CD8-positive, alpha-beta T cell (primary cell): ENCODE measurements at regions of chr2 and their contacts with region 1.

Region 1: DNA sequence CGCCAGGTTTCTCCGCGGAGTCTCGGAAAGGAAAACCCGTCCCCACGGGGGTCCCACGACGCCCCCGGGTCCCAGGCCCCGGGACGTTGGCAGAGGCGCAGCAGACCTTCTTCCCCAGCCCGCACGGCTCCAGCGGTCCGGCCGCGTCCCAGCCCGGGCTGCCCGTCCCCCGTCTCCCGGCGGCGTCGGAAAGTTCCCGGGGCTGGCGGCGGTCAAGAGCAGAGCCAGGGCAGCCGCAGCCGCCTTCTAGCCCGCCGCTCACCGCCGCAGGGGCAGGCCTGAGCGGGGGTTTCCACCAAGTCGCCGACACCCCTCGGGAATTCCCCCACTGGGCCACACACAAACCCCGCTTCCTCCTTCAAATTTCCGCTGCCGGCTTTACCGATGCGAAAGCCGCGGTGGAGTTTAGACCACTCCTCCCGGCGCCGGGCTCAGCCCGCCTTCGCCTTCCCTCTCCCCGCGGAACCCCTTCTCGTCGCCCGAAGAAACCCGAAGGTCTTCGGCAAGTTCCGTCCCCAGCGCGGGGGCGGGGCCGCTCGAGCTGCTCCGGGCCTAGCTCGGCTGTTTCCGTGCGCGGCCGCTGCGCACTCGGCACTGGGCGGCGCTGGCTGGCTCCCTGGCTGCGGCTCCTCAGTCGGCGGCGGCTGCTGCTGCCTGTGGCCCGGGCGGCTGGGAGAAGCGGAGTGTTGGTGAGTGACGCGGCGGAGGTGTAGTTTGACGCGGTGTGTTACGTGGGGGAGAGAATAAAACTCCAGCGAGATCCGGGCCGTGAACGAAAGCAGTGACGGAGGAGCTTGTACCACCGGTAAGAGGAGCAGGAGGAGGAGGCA is at the start of gene CREB1:
- DNase-seq: peak; percentile 99 to 100 (median 100)
- ATAC-seq: peak; percentile 80
- H3K4me3 ChIP-seq: peak within 1 kb of the TSS; percentile 73 to 82
- H3K4me3 Mint-ChIP-seq: peak within 1 kb of the TSS; percentile 90
- H3K27ac ChIP-seq: peak within 1 kb of the TSS; percentile 97 to 99
- H3K27ac Mint-ChIP-seq: peak within 1 kb of the TSS; percentile 98
- H3K4me1 ChIP-seq: peaks cover 59% of the 10 kb centered on the region
- H3K4me1 Mint-ChIP-seq: peaks cover 70% of the 10 kb centered on the region
- H3K27me3 ChIP-seq: no peaks in the 10 kb centered on the region
- H3K27me3 Mint-ChIP-seq: no peaks in the 10 kb centered on the region
- CTCF ChIP-seq: no peak
- total RNA-seq, gene CREB1: 43.9 to 51.4 TPM

Region 2: DNA sequence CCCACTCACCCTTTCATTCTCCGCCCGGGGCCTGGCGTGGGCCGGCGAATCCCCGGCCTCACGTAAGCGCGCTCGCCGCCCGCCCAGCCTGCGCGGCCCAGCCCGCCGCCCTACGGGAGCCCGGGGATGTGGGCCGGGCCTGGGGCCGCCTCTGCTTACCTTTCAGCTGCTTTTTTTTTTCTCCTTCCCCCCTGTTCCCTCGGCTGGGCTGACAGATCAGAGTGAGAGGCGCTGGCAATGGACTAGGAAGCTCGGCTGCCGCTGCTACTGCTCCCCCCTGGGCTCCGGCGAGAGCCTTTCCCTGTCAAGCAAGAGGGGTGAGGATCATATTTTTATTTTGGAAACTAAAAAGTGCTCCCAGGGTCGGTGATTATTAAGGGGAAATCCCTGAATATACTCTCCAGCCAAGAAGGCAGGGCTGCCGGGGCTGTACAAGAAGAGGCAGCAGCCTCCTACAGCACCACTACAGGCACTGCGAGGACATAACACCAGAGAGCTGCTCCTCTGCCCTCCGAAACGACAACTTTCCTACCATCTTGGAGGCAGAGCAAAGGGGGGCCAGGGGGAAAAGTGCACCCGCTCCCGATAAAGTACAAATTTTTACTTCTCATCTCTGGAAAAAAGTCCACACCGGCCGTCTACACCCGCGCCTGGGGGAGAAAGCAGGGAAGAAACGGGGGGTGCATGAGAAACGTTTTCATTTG is 1443.7 kb before region 1 on chr2 and contains the start of gene INO80D:
- CTCF ChIA-PET with region 1: no interaction called
- POLR2A ChIA-PET with region 1: no interaction called
- intact Hi-C with region 1: loop called in 1 of 2 experiments (anchors 10 kb)
- DNase-seq: peak; percentile 63 to 93 (median 76)
- ATAC-seq: peak; percentile 91
- H3K4me3 ChIP-seq: peak within 1 kb of the TSS; percentile 85 to 88
- H3K4me3 Mint-ChIP-seq: peak within 1 kb of the TSS; percentile 100
- H3K27ac ChIP-seq: peak within 1 kb of the TSS; percentile 92 to 98
- H3K27ac Mint-ChIP-seq: peak within 1 kb of the TSS; percentile 100
- H3K4me1 ChIP-seq: peaks cover 32% of the 10 kb centered on the region
- H3K4me1 Mint-ChIP-seq: peaks cover 50% of the 10 kb centered on the region
- H3K27me3 ChIP-seq: no peaks in the 10 kb centered on the region
- H3K27me3 Mint-ChIP-seq: no peaks in the 10 kb centered on the region
- CTCF ChIP-seq: peak; percentile 66
- total RNA-seq, gene INO80D: 48.5 to 48.6 TPM

Region 3: DNA sequence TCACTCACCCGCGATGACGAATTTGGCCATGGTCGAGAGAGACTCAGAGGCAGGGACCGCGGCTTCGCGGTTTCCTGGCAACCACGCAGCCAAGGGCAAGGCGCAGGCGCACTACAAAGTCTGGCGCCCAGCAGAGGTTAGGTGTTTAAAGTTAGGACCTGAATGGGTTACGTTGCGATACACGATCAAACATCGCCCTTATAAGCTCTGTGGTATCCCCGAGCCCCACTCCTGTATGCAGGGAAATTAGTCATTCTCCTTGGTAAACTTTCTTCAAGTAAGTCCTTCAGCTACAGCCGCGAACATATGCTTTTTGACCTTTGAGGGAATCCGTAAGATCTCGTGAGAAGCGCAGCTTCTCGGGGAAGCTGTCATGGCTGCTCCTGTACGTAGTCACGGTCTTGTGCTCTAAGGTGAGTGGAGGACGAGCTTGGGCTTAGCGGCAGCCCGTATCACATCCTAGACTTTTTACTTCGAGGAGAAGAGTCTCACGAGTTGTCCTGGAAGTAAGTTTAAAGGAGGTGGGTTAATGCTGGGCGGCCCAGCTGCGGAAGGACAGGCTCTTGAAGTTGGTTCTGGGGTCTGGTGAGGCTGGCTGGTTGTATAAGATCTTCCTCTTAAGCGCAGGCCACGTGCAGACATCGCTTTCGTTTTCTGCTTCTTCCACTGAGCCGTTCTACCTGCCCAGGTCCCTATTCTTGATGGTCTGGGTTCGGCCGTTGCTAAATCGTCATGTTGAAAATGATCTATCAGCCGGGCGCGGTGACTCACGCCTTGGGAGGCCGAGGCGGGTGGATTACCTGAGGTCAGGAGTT is 764.1 kb before region 1 on chr2 and contains the starts of genes FASTKD2 and MDH1B:
- CTCF ChIA-PET with region 1: no interaction called
- POLR2A ChIA-PET with region 1: interaction called, 10 read pairs
- intact Hi-C with region 1: loop called (anchors 1 to 5 kb)
- DNase-seq: peak; percentile 64 to 94 (median 81)
- ATAC-seq: peak; percentile 87
- H3K4me3 ChIP-seq: peak within 1 kb of the TSS; percentile 62 to 94
- H3K4me3 Mint-ChIP-seq: peak within 1 kb of the TSS; percentile 94
- H3K27ac ChIP-seq: peak within 1 kb of the TSS; percentile 93 to 97
- H3K27ac Mint-ChIP-seq: peak within 1 kb of the TSS; percentile 98
- H3K4me1 ChIP-seq: peaks cover 40% of the 10 kb centered on the region
- H3K4me1 Mint-ChIP-seq: peaks cover 41% of the 10 kb centered on the region
- H3K27me3 ChIP-seq: no peaks in the 10 kb centered on the region
- H3K27me3 Mint-ChIP-seq: no peaks in the 10 kb centered on the region
- CTCF ChIP-seq: no peak
- total RNA-seq, gene FASTKD2: 31.3 to 33.8 TPM
- total RNA-seq, gene MDH1B: 0.19 to 0.33 TPM

Region 4: GRCh38 chr2:207238831-207239701 is 290.5 kb before region 1 on chr2:
- CTCF ChIA-PET with region 1: no interaction called
- POLR2A ChIA-PET with region 1: no interaction called
- intact Hi-C with region 1: no loop called
- DNase-seq: peak in 1 of 9 experiments; percentile 25
- ATAC-seq: no peak
- H3K4me3 ChIP-seq: no peak overlapping the region
- H3K4me3 Mint-ChIP-seq: no peak overlapping the region
- H3K27ac ChIP-seq: no peak overlapping the region
- H3K27ac Mint-ChIP-seq: no peak overlapping the region
- H3K4me1 ChIP-seq: peaks cover 27% of the 10 kb centered on the region
- H3K4me1 Mint-ChIP-seq: peaks cover 12% of the 10 kb centered on the region
- H3K27me3 ChIP-seq: no peaks in the 10 kb centered on the region
- H3K27me3 Mint-ChIP-seq: no peaks in the 10 kb centered on the region
- CTCF ChIP-seq: no peak

Region 5: DNA sequence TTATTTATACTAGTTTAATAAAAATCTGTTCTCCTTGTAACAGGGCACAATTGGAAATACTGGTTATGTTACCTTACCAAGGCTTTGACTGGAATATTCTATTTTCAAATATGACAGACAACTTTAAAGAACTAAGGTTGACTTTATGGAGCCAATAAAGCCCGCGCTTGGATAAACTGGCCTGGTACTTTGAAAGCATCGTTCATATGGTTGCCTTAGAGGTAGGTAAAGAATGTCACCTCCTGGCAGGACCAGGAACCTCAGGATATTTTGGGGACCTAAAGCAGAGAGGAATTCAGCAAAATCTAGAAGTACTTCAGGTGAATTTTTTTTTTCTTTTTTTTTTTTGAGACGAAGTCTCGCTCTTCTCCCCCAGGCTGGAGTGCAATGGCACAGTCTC is 71.0 kb before region 1 on chr2:
- CTCF ChIA-PET with region 1: no interaction called
- POLR2A ChIA-PET with region 1: no interaction called
- intact Hi-C with region 1: no loop called
- DNase-seq: no peak
- ATAC-seq: no peak
- H3K4me3 ChIP-seq: no peak overlapping the region
- H3K4me3 Mint-ChIP-seq: no peak overlapping the region
- H3K27ac ChIP-seq: no peak overlapping the region
- H3K27ac Mint-ChIP-seq: no peak overlapping the region
- H3K4me1 ChIP-seq: no peaks in the 10 kb centered on the region
- H3K4me1 Mint-ChIP-seq: no peaks in the 10 kb centered on the region
- H3K27me3 ChIP-seq: no peaks in the 10 kb centered on the region
- H3K27me3 Mint-ChIP-seq: no peaks in the 10 kb centered on the region
- CTCF ChIP-seq: no peak

Region 6: GRCh38 chr2:207513551-207514257 is 15.8 kb before region 1 on chr2:
- CTCF ChIA-PET with region 1: interaction called, 7 read pairs
- POLR2A ChIA-PET with region 1: interaction called, 5 read pairs
- intact Hi-C with region 1: loop called in 1 of 2 experiments (anchors 1 kb)
- DNase-seq: no peak
- ATAC-seq: no peak
- H3K4me3 ChIP-seq: no peak overlapping the region
- H3K4me3 Mint-ChIP-seq: no peak overlapping the region
- H3K27ac ChIP-seq: no peak overlapping the region
- H3K27ac Mint-ChIP-seq: no peak overlapping the region
- H3K4me1 ChIP-seq: no peaks in the 10 kb centered on the region
- H3K4me1 Mint-ChIP-seq: peaks cover 4% of the 10 kb centered on the region
- H3K27me3 ChIP-seq: no peaks in the 10 kb centered on the region
- H3K27me3 Mint-ChIP-seq: no peaks in the 10 kb centered on the region
- CTCF ChIP-seq: no peak

Region 7: GRCh38 chr2:207565736-207566500 is 36.4 kb after region 1 on chr2:
- CTCF ChIA-PET with region 1: interaction called, 4 read pairs
- POLR2A ChIA-PET with region 1: interaction called, 9 read pairs
- intact Hi-C with region 1: loop called in 1 of 2 experiments (anchors 2 kb)
- DNase-seq: no peak
- ATAC-seq: no peak
- H3K4me3 ChIP-seq: no peak overlapping the region
- H3K4me3 Mint-ChIP-seq: no peak overlapping the region
- H3K27ac ChIP-seq: no peak overlapping the region
- H3K27ac Mint-ChIP-seq: peak overlapping the region; percentile 73
- H3K4me1 ChIP-seq: no peaks in the 10 kb centered on the region
- H3K4me1 Mint-ChIP-seq: peaks cover 31% of the 10 kb centered on the region
- H3K27me3 ChIP-seq: no peaks in the 10 kb centered on the region
- H3K27me3 Mint-ChIP-seq: no peaks in the 10 kb centered on the region
- CTCF ChIP-seq: no peak

Region 8: DNA sequence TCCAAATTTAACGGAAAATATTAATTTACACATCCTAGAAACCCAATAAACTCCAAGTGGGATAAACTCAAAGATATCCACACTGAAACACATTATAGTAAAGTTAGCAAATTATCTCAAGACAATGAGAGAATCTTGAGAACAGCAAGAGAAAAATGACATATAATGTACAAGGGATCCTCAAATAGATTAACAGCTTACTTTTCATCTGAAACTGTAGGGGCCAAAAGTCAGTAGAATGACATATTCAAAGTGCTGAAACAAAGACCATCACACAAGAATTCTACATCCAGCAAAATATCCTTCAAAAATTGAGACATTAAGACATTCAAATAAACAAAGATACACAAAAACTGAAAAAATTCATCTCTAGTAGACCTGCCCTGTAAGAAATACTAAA is 114.3 kb after region 1 on chr2:
- CTCF ChIA-PET with region 1: no interaction called
- POLR2A ChIA-PET with region 1: no interaction called
- intact Hi-C with region 1: no loop called
- DNase-seq: no peak
- ATAC-seq: no peak
- H3K4me3 ChIP-seq: no peak overlapping the region
- H3K4me3 Mint-ChIP-seq: no peak overlapping the region
- H3K27ac ChIP-seq: no peak overlapping the region
- H3K27ac Mint-ChIP-seq: no peak overlapping the region
- H3K4me1 ChIP-seq: no peaks in the 10 kb centered on the region
- H3K4me1 Mint-ChIP-seq: no peaks in the 10 kb centered on the region
- H3K27me3 ChIP-seq: peaks cover 0 to 2% of the 10 kb centered on the region in 2 experiments
- H3K27me3 Mint-ChIP-seq: peaks cover 4% of the 10 kb centered on the region
- CTCF ChIP-seq: no peak

Region 9: GRCh38 chr2:208025037-208025813 is 495.7 kb after region 1 on chr2 and contains the start of gene PLEKHM3:
- CTCF ChIA-PET with region 1: no interaction called
- POLR2A ChIA-PET with region 1: interaction called, 4 read pairs
- intact Hi-C with region 1: loop called in 1 of 2 experiments (anchors 5 kb)
- DNase-seq: peak; percentile 53 to 90 (median 71)
- ATAC-seq: peak; percentile 76
- H3K4me3 ChIP-seq: peak within 1 kb of the TSS; percentile 79 to 80
- H3K4me3 Mint-ChIP-seq: peak within 1 kb of the TSS; percentile 98
- H3K27ac ChIP-seq: peak within 1 kb of the TSS; percentile 64 to 67
- H3K27ac Mint-ChIP-seq: peak within 1 kb of the TSS; percentile 95
- H3K4me1 ChIP-seq: peaks cover 6% of the 10 kb centered on the region
- H3K4me1 Mint-ChIP-seq: peaks cover 30% of the 10 kb centered on the region
- H3K27me3 ChIP-seq: no peaks in the 10 kb centered on the region
- H3K27me3 Mint-ChIP-seq: no peaks in the 10 kb centered on the region
- CTCF ChIP-seq: no peak
- total RNA-seq, gene PLEKHM3: 10.9 to 11.3 TPM